ENCODE measurements at regions of chr3 and their contacts with region 1.

Region 1: DNA sequence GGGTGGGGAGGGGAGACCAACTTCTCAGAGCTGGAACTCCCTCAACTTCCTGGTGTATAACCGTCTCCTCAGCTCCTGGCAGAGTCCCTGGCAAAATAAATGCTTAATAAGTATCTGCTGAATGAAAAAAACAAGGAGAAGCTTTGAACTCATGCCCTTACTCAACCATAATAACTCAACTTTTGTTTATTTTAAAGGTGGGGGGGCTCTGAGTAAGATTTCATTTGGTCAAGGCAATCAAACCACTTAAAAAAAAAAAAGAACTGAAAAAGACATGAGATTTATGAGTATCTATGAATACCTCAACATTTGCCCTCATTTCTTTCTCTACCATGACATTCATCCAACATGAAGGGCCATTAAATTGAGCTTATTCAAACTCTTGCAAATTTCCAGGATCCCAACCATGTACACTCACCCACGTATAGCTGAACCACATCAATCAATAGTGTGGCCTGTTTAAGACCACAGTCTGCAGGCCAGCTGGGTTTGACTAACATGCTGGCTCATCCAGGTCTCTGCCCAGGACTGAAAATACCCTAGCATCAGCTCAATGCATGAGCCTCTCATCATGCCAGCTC is 157.9 kb downstream of the FOXP1 start:
- H3K4me3 ChIP-seq: no peak overlapping the region
- H3K27ac ChIP-seq: no peak overlapping the region
- H3K4me1 ChIP-seq: peaks cover 8% of the 10 kb centered on the region
- CTCF ChIP-seq: no peak

Region 2: GRCh38 chr3:71444028-71444860 is 18.7 kb after region 1 on chr3:
- CTCF ChIA-PET with region 1: no interaction called
- POLR2A ChIA-PET with region 1: no interaction called
- H3K4me3 ChIP-seq: no peak overlapping the region
- H3K27ac ChIP-seq: no peak overlapping the region
- H3K4me1 ChIP-seq: no peaks in the 10 kb centered on the region
- CTCF ChIP-seq: no peak

Region 3: GRCh38 chr3:71511037-71511436 is 85.5 kb after region 1 on chr3:
- CTCF ChIA-PET with region 1: interaction called, 18 read pairs
- POLR2A ChIA-PET with region 1: no interaction called
- H3K4me3 ChIP-seq: no peak overlapping the region
- H3K27ac ChIP-seq: no peak overlapping the region
- H3K4me1 ChIP-seq: 0 out of 2 replicates have a peak, but pooled peaks cover 10% of the 10 kb centered on the region
- CTCF ChIP-seq: no peak

Region 4: DNA sequence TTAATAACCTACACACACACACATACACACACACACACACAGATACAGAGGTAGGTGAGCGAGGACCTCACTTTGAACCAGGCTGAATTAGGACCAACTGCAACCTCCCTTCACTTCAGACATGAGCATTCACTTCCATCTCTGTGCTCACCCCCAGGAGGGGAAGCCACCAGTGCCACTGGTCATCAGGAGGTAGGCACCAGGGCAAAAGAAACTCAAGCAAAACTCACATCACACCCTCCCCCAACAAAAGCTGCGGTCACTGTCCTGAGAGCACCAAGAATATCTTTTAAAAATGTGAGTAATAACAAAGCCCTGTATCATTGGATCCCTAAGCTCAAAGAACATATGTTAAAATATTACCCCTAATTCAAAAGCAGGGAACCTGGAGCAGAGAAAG is 149.9 kb after region 1 on chr3:
- CTCF ChIA-PET with region 1: no interaction called
- POLR2A ChIA-PET with region 1: no interaction called
- H3K4me3 ChIP-seq: no peak overlapping the region
- H3K27ac ChIP-seq: no peak overlapping the region
- H3K4me1 ChIP-seq: peaks cover 15% of the 10 kb centered on the region
- CTCF ChIP-seq: no peak